IMR-90 (cell line): ENCODE measurements at regions of chr2 and their contacts with region 1.

Region 1: GRCh38 chr2:77179297-77179696 is 342.9 kb downstream of the LRRTM4 start:
- DNase-seq: no peak
- ATAC-seq: no peak
- H3K4me3 ChIP-seq: no peak overlapping the region
- H3K27ac ChIP-seq: no peak overlapping the region
- H3K4me1 ChIP-seq: no peaks in the 10 kb centered on the region
- H3K27me3 ChIP-seq: no peaks in the 10 kb centered on the region
- CTCF ChIP-seq: no peak
- POLR2A ChIP-seq: no peak
- RAD21 ChIP-seq: no peak

Region 2: GRCh38 chr2:78940998-78941397 is 1761.7 kb after region 1 on chr2:
- CTCF ChIA-PET with region 1: no interaction called
- POLR2A ChIA-PET with region 1: no interaction called
- dilution Hi-C with region 1: no loop called
- in situ Hi-C with region 1: no loop called
- intact Hi-C with region 1: loop called (anchors 10 kb)
- DNase-seq: no peak
- ATAC-seq: no peak
- H3K4me3 ChIP-seq: no peak overlapping the region
- H3K27ac ChIP-seq: no peak overlapping the region
- H3K4me1 ChIP-seq: no peaks in the 10 kb centered on the region
- H3K27me3 ChIP-seq: no peaks in the 10 kb centered on the region
- CTCF ChIP-seq: no peak
- POLR2A ChIP-seq: no peak
- RAD21 ChIP-seq: no peak